Naive thymus-derived CD4-positive, alpha-beta T cell (primary cell): ENCODE measurements at regions of chr6 and their contacts with region 1.

Region 1: GRCh38 chr6:5665173-5665572 is 341.6 kb downstream of the NRN1 start:
- DNase-seq: peak in 7 of 9 donors; percentile 25 to 75 (median 60)
- ATAC-seq: peak; percentile 84
- H3K4me3 ChIP-seq: peak overlapping the region; percentile 4
- H3K4me3 Mint-ChIP-seq: peak overlapping the region; percentile 41 to 81 (median 74)
- H3K27ac ChIP-seq: peak overlapping the region; percentile 45
- H3K27ac Mint-ChIP-seq: peak overlapping the region; percentile 75 to 98 (median 90)
- H3K4me1 ChIP-seq: peaks cover 0 to 56% of the 10 kb centered on the region in 2 donors
- H3K4me1 Mint-ChIP-seq: peaks cover 24 to 90% (median 84%) of the 10 kb centered on the region in 7 donors
- H3K27me3 ChIP-seq: no peaks in the 10 kb centered on the region
- H3K27me3 Mint-ChIP-seq: no peaks in the 10 kb centered on the region

Region 2: DNA sequence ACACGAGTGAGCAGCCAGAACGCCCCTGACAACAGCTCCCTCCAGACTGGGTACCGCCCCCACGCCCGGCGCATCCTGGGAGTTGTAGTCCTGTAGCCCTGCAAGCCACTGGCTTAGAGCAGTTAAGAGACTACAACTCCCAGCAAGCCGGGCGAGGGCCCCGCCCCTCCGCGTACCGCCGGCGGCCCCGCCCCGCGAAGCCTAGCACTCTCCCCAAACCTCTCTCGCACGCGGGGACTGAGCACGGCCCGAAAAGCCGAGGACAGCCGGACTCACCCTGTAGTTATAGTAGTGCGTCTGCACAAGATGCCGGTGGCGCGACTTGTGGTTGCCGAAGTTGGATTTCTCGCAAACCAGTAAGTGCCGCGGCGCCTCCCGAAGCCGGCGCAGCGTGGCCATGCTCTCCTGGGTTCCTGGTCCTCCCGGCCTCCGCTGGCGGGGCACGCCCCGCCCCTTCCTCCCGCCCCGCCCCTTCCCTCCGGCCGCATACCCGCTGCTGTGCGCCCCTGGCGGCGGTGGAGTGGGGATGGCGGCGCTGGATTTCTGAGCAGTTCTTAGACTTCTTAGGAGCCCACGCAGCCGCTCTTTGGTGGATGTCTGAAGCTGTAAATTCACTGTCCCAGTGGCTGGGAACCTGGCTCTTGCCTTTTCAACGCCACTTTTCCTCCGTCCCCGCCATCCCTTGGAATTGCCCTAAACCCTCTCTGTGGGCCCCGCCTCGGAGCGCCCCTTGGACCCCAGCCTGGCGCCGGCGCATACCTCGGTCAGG is 661.4 kb before region 1 on chr6 and contains the start of gene RPP40:
- CTCF ChIA-PET with region 1: no interaction called
- POLR2A ChIA-PET with region 1: no interaction called
- intact Hi-C with region 1: loop called in 1 of 2 experiments (anchors 10 kb)
- DNase-seq: peak; percentile 97 to 99 (median 99)
- ATAC-seq: peak; percentile 97
- H3K4me3 ChIP-seq: peak within 1 kb of the TSS; percentile 91
- H3K4me3 Mint-ChIP-seq: peak within 1 kb of the TSS; percentile 88 to 95 (median 94)
- H3K27ac ChIP-seq: peak within 1 kb of the TSS; percentile 82
- H3K27ac Mint-ChIP-seq: peak within 1 kb of the TSS; percentile 91 to 98 (median 94)
- H3K4me1 ChIP-seq: peaks cover 9% of the 10 kb centered on the region in 2 donors
- H3K4me1 Mint-ChIP-seq: peaks cover 0 to 20% (median 13%) of the 10 kb centered on the region in 7 donors
- H3K27me3 ChIP-seq: no peaks in the 10 kb centered on the region
- H3K27me3 Mint-ChIP-seq: no peaks in the 10 kb centered on the region
- total RNA-seq, gene RPP40: 3.8 to 8.0 (median 5.1) TPM

Region 3: GRCh38 chr6:5584078-5584482 is 81.1 kb before region 1 on chr6:
- CTCF ChIA-PET with region 1: interaction called, 3 read pairs
- POLR2A ChIA-PET with region 1: interaction called, 9 read pairs
- intact Hi-C with region 1: loop called in 1 of 2 experiments (anchors 1 kb)
- DNase-seq: no peak
- ATAC-seq: no peak
- H3K4me3 ChIP-seq: no peak overlapping the region
- H3K4me3 Mint-ChIP-seq: peak overlapping the region in 1 of 10 donors; percentile 45
- H3K27ac ChIP-seq: no peak overlapping the region
- H3K27ac Mint-ChIP-seq: no peak overlapping the region
- H3K4me1 ChIP-seq: peaks cover 0 to 12% of the 10 kb centered on the region in 2 donors
- H3K4me1 Mint-ChIP-seq: peaks cover 9 to 25% (median 19%) of the 10 kb centered on the region in 7 donors
- H3K27me3 ChIP-seq: no peaks in the 10 kb centered on the region
- H3K27me3 Mint-ChIP-seq: no peaks in the 10 kb centered on the region

Region 4: DNA sequence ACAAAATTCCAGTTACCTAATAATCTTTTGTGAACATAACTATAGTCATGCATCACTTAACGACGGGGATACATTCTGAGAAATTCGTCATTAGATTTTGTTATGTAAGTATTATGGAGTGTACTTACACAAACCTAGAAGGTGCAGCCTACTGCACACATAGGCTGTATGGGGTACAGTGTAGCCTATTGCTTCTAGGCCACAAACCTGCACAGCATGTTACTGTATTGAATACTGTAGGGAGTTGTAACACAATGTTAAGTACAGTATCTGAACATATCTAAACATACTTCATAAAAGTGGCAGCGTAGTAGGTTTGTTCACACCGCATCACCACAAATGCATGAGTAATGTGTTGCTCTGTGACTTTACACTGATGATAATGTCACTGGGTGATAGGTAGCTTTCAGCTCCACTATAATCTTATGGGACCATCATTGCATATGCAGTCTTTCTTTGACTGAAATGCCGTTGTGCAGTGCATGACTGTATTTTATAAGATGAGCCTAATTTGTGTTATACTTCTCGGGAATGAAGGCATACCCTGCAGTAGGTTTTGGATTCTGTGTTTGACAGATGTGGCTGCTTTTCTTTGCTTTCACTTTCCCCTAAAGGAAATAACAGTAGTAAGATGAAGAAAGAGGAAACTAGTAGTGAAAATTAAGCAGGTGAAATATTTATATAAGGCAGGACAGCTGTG is 38.3 kb before region 1 on chr6:
- CTCF ChIA-PET with region 1: interaction called, 4 read pairs
- POLR2A ChIA-PET with region 1: interaction called, 3 read pairs
- intact Hi-C with region 1: loop called in 1 of 2 experiments (anchors 1 kb)
- DNase-seq: peak in 6 of 9 donors; percentile 16 to 47 (median 34)
- ATAC-seq: peak; percentile 71
- H3K4me3 ChIP-seq: peak overlapping the region; percentile 38
- H3K4me3 Mint-ChIP-seq: peak overlapping the region in 9 of 10 donors; percentile 56 to 78 (median 70)
- H3K27ac ChIP-seq: peak overlapping the region; percentile 52
- H3K27ac Mint-ChIP-seq: peak overlapping the region; percentile 45 to 95 (median 85)
- H3K4me1 ChIP-seq: peaks cover 9 to 26% of the 10 kb centered on the region in 2 donors
- H3K4me1 Mint-ChIP-seq: peaks cover 23 to 61% (median 52%) of the 10 kb centered on the region in 7 donors
- H3K27me3 ChIP-seq: no peaks in the 10 kb centered on the region
- H3K27me3 Mint-ChIP-seq: peaks cover 0 to 4% (median 0%) of the 10 kb centered on the region in 5 donors

Region 5: GRCh38 chr6:5738211-5738610 is 73.0 kb after region 1 on chr6:
- CTCF ChIA-PET with region 1: no interaction called
- POLR2A ChIA-PET with region 1: no interaction called
- intact Hi-C with region 1: no loop called
- DNase-seq: no peak
- ATAC-seq: no peak
- H3K4me3 ChIP-seq: no peak overlapping the region
- H3K4me3 Mint-ChIP-seq: no peak overlapping the region
- H3K27ac ChIP-seq: no peak overlapping the region
- H3K27ac Mint-ChIP-seq: no peak overlapping the region
- H3K4me1 ChIP-seq: no peaks in the 10 kb centered on the region
- H3K4me1 Mint-ChIP-seq: peaks cover 0 to 8% (median 4%) of the 10 kb centered on the region in 7 donors
- H3K27me3 ChIP-seq: no peaks in the 10 kb centered on the region
- H3K27me3 Mint-ChIP-seq: no peaks in the 10 kb centered on the region

Region 6: DNA sequence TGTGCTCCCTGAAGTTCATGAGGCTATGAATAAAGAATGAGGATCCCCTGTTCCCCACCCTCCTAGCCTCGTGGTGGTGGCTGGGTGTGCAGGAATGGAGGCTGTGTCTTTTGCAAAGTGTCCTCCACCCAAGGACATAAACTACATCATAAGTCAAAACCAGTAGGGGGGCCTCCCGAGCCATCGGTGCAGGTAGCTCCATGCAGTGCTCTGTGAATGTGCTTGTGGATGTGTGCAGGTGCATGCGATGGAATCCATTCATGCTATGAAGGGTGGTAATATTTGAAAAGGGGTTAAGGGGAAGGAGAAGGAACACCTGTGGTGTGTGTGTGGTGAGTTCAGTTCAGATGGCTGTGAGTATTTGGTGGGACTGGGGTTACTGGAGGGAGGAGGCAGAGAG is 144.3 kb after region 1 on chr6:
- CTCF ChIA-PET with region 1: no interaction called
- POLR2A ChIA-PET with region 1: no interaction called
- intact Hi-C with region 1: no loop called
- DNase-seq: peak in 4 of 9 donors; percentile 20 to 46 (median 30)
- ATAC-seq: peak; percentile 37
- H3K4me3 ChIP-seq: no peak overlapping the region
- H3K4me3 Mint-ChIP-seq: peak overlapping the region in 1 of 10 donors; percentile 0
- H3K27ac ChIP-seq: no peak overlapping the region
- H3K27ac Mint-ChIP-seq: peak overlapping the region in 7 of 9 donors; percentile 1 to 63 (median 27)
- H3K4me1 ChIP-seq: peaks cover 4 to 8% of the 10 kb centered on the region in 2 donors
- H3K4me1 Mint-ChIP-seq: peaks cover 16 to 42% (median 26%) of the 10 kb centered on the region in 7 donors
- H3K27me3 ChIP-seq: no peaks in the 10 kb centered on the region
- H3K27me3 Mint-ChIP-seq: peaks cover 0 to 3% (median 0%) of the 10 kb centered on the region in 5 donors

Region 7: DNA sequence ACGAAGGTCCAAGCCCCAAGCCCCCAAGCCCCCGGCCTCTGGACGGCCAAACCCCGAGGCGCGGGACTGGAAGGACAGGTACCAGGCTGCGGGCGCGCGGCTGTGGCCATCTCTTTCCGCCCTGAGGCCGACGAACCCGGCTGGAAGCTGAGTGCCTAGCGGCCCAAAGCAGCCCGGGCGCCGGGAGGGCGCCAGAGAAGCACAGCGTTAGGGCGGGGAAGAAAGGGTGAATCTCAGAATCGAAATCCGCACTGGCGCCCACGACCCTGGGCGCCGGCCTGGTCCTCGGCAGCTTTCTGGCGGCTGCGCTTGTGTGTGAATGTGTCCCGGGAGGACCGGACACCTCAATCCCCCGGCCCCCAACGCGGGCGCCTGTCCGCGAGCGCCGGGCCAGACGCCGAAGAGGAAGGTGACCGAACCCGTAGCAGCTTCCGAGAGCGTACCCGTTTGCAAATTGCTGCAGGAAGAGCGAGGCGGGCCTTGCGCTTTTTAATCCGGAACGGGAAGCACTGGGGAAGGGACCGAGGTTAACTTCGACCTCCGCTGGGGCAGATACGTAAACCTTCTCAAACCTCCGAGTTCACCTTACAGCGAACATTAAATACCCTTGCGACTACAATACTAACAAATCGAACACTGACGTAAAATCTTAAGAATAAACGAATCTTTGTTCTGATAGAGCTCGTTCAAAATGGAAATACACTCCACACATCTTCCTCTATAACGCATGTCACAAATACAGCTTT is 338.6 kb after region 1 on chr6:
- CTCF ChIA-PET with region 1: no interaction called
- POLR2A ChIA-PET with region 1: interaction called, 3 read pairs
- intact Hi-C with region 1: loop called in 1 of 2 experiments (anchors 5 kb)
- DNase-seq: peak in 6 of 9 donors; percentile 31 to 59 (median 48)
- ATAC-seq: no peak
- H3K4me3 ChIP-seq: peak overlapping the region; percentile 46
- H3K4me3 Mint-ChIP-seq: peak overlapping the region; percentile 75 to 94 (median 84)
- H3K27ac ChIP-seq: no peak overlapping the region
- H3K27ac Mint-ChIP-seq: peak overlapping the region in 7 of 9 donors; percentile 52 to 90 (median 75)
- H3K4me1 ChIP-seq: peaks cover 22 to 67% of the 10 kb centered on the region in 2 donors
- H3K4me1 Mint-ChIP-seq: peaks cover 45 to 86% (median 71%) of the 10 kb centered on the region in 7 donors
- H3K27me3 ChIP-seq: peaks cover 79 to 88% of the 10 kb centered on the region in 2 donors
- H3K27me3 Mint-ChIP-seq: peaks cover 81 to 96% (median 86%) of the 10 kb centered on the region in 5 donors